Gastrocnemius medialis (tissue), 4 donors: ENCODE measurements at regions of chr22 and their contacts with region 1.

Region 1: DNA sequence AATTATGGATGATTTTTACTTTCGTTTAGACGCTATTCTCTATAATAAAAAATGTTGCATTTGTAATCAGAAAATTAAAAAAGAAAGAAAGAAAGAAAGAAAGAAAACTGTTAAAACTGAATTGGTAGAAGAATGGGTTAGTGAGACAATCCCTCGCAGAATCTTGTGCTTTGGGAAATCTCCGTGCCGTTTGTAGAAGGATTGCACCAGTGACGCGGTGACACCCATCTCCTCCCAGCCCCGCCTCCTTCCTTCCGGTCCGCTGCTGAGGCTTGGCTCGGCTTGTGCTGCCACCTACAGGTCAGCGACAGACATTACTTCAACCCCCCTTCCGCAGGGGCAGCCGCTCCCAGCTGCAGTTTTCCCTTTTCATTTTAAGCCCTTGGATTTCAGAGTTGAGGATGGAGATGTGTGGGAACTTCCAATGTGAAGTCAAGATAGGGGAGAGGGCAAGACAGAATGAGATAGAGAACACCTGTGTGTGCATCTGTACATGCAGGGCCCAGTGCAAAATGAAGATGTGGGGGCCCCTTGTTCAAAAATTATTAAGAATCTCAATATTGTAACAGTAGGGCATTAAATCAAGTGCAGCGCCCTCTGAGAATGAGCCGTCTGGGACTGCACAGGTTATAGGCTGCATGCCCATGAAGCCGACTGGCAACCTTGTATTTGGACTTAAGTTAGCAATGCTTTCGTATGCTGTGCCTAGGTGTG is 41.1 kb downstream of the TST start:
- DNase-seq: peak; percentile 79 to 80
- ATAC-seq: peak; percentile 92 to 94
- H3K4me3 ChIP-seq: peak overlapping the region; percentile 47 to 51 (median 50)
- H3K27ac ChIP-seq: no peak overlapping the region
- H3K4me1 ChIP-seq: peaks cover 0 to 5% of the 10 kb centered on the region in 2 donors
- H3K27me3 ChIP-seq: peaks cover 1 to 15% (median 2%) of the 10 kb centered on the region in 3 donors
- CTCF ChIP-seq: peak; percentile 85 to 94 (median 89)
- POLR2A ChIP-seq: no peak

Region 2: DNA sequence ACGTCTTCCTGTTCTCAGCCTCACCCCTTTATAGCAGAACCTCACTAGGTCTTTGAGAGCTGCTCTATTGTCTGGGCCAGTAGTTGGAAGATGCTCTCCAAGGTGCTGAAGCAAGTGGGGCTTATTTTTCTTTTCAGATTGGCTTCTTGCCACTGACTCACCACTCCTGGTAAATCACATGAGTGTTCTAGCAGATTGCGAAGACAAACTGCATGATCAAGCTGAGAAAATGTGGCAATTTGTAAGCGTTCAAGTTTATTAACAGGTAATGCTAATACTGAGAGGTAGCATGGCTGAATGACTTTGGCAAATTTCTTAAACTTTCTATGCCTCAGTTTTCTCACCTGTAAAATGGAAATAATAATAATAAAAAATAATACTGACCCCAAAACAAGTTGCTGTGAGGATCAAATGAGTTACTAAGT is 333.8 kb before region 1 on chr22:
- in situ Hi-C with region 1: no loop called
- intact Hi-C with region 1: no loop called
- DNase-seq: no peak
- ATAC-seq: no peak
- H3K4me3 ChIP-seq: no peak overlapping the region
- H3K27ac ChIP-seq: no peak overlapping the region
- H3K4me1 ChIP-seq: no peaks in the 10 kb centered on the region
- H3K27me3 ChIP-seq: peaks cover 11 to 40% (median 17%) of the 10 kb centered on the region in 3 donors
- CTCF ChIP-seq: no peak
- POLR2A ChIP-seq: no peak

Region 3: GRCh38 chr22:36757668-36758211 is 220.4 kb before region 1 on chr22:
- in situ Hi-C with region 1: no loop called
- intact Hi-C with region 1: loop called (anchors 1 kb)
- DNase-seq: peak; percentile 52 to 66
- ATAC-seq: peak; percentile 77 to 82
- H3K4me3 ChIP-seq: no peak overlapping the region
- H3K27ac ChIP-seq: no peak overlapping the region
- H3K4me1 ChIP-seq: no peaks in the 10 kb centered on the region
- H3K27me3 ChIP-seq: peaks cover 18 to 20% (median 18%) of the 10 kb centered on the region in 3 donors
- CTCF ChIP-seq: peak; percentile 31 to 85 (median 64)
- POLR2A ChIP-seq: no peak

Region 4: GRCh38 chr22:36775964-36776669 is 202.0 kb before region 1 on chr22 and contains the start of gene IFT27:
- in situ Hi-C with region 1: loop called (anchors 10 to 25 kb)
- intact Hi-C with region 1: no loop called
- DNase-seq: peak; percentile 100
- ATAC-seq: peak; percentile 99 to 100
- H3K4me3 ChIP-seq: peak within 1 kb of the TSS; percentile 73 to 97 (median 95)
- H3K27ac ChIP-seq: peak within 1 kb of the TSS; percentile 84 to 92 (median 88)
- H3K4me1 ChIP-seq: peaks cover 13 to 16% of the 10 kb centered on the region in 2 donors
- H3K27me3 ChIP-seq: no peaks in the 10 kb centered on the region
- CTCF ChIP-seq: no peak
- POLR2A ChIP-seq: peak; percentile 34 to 46
- total RNA-seq, gene IFT27: 2.4 to 8.3 (median 6.7) TPM

Region 5: DNA sequence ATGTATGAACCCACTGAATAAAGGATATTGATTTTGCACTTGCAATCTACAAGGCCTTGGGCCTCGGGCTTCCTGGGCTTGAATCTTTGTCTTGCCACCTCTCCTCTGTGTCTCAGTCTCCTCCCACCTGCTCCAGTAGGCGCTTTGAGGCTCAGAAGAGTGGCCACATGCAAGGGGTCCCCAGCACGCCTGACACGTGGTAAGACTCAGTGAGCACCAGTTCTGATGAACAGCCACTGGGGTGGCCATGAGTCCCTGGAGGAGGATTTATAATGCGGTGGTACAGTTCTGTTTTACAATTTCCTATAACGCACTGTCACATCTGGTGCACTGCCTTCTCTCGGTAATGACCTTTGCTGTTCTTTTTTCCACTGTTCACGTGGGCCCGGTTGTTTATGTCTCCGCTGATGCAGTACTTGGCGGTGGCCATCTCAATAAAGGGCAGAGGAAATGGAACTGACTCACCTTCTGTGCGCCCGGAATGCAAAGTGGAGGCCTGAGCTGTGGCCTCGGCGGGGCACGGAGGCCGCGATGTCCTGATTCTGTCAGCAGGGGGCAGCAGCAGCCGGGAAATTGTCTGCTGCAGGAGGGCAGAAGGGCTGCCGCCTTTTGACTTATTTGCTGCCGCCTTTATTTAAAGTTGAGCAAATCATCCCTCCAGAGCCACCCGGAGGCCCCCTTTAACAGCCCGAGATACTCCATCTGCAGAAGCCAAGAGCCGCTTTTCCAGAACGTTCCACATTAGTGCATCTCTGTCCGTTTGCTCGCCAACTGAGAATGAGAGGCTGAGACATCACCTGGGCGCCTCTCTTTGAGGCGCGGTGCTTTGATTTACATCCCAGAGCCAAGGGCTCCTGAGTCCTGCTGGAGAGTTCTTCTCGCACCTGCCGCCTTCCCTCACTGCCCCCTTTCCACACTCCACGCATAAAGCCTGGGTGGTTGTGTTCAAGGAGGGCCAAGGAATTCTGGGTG is 196.2 kb before region 1 on chr22:
- in situ Hi-C with region 1: loop called (anchors 10 to 25 kb)
- intact Hi-C with region 1: loop called (anchors 1 kb)
- DNase-seq: peak; percentile 31 to 53
- ATAC-seq: peak; percentile 71 to 87
- H3K4me3 ChIP-seq: no peak overlapping the region
- H3K27ac ChIP-seq: no peak overlapping the region
- H3K4me1 ChIP-seq: peaks cover 0 to 9% of the 10 kb centered on the region in 2 donors
- H3K27me3 ChIP-seq: peaks cover 0 to 27% (median 6%) of the 10 kb centered on the region in 3 donors
- CTCF ChIP-seq: peak; percentile 74 to 92 (median 88)
- POLR2A ChIP-seq: no peak

Region 6: DNA sequence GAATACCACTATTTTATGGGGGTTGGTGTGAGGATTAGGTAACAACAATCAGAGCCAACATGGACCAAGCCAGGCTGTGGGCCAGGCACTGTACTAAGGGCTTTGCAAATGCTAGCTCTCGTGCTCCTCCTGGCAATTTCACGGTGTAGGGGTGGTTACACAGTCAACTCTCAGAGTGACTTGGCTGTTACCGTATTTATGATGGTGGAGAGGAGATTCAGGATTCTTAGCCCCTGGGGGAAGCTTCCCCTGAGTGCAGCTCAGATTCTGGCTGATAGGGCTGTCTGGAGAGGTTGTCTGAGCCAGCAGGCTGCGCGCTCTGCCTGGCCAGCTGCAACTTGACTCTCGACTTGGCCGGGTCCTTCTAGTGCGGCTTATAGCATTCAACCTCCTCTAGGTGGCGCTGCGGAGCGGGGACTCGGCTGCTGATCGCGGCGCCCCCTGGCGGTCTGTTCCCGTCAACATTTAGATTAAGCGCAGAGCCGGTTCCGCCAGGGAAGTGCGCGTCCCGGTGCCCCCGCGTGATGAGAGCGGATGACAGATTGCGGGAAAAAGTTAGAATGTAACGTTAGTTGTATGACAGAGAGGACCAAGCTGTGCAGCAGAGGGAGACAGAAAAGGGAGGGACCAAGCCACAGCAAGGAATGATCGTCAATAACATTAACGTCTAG is 121.8 kb before region 1 on chr22:
- in situ Hi-C with region 1: loop called in 1 of 4 experiments (anchors 10 kb)
- intact Hi-C with region 1: loop called (anchors 1 kb)
- DNase-seq: peak; percentile 79 to 81
- ATAC-seq: peak; percentile 89 to 96
- H3K4me3 ChIP-seq: peak overlapping the region in 1 of 4 donors; percentile 26
- H3K27ac ChIP-seq: no peak overlapping the region
- H3K4me1 ChIP-seq: peaks cover 8 to 24% of the 10 kb centered on the region in 2 donors
- H3K27me3 ChIP-seq: peaks cover 0 to under 1% (median 0%) of the 10 kb centered on the region in 3 donors
- CTCF ChIP-seq: peak; percentile 97 to 100 (median 99)
- POLR2A ChIP-seq: no peak

Region 7: DNA sequence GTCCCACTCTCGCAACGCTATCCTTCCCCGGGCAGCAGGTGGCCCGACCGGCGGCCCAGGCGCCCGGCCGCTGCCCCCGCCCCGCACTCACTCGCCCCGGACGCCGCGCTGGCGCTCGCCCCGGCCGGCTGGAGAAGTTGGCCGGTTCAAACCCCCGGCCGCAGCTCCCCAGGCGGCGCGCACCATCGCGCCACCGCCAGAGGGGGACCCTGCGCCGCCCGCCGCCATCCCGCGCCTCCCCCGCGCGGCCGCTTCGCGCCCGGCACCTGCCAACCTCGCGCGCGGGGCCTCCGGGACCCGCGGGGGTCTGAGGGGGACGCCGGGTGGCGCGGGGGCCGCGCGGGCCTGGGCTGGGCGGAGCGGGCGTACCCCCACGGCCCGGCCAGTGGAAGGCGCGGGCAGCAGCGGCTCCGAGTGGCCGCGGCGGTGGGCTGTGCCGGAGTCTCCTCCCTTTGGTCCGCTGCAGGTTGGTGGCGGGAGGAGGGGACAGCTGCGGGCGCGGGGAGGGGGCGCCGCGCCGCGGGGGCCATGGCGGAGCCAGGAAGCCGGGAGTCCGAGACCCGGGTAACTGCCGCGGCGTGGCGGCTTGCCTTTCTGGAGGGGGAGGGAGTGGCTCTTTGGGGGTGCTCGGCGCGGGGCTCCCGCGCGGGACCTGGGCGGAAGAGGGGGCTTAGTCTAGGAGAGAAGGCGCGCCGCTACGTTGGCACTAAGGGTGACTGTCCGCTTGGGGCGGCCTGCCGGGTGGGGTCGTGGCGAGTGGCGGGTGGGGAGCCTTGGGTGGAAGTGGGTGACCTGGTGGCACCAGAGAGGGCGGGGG is 41.4 kb after region 1 on chr22 and contains the starts of genes MPST and TST:
- in situ Hi-C with region 1: no loop called
- intact Hi-C with region 1: loop called (anchors 2 kb)
- DNase-seq: peak; percentile 73 to 74
- ATAC-seq: peak; percentile 88
- H3K4me3 ChIP-seq: peak within 1 kb of the TSS; percentile 74 to 99 (median 84)
- H3K27ac ChIP-seq: peak within 1 kb of the TSS; percentile 88 to 99 (median 96)
- H3K4me1 ChIP-seq: peaks cover 23 to 33% of the 10 kb centered on the region in 2 donors
- H3K27me3 ChIP-seq: no peaks in the 10 kb centered on the region
- CTCF ChIP-seq: peak; percentile 18 to 79 (median 55)
- POLR2A ChIP-seq: peak; percentile 77 to 81
- total RNA-seq, gene MPST: 131 to 161 (median 146) TPM
- total RNA-seq, gene TST: 42.2 to 66.5 (median 51.9) TPM